ENCODE measurements at regions of chr4 and their contacts with region 1.

Region 1: DNA sequence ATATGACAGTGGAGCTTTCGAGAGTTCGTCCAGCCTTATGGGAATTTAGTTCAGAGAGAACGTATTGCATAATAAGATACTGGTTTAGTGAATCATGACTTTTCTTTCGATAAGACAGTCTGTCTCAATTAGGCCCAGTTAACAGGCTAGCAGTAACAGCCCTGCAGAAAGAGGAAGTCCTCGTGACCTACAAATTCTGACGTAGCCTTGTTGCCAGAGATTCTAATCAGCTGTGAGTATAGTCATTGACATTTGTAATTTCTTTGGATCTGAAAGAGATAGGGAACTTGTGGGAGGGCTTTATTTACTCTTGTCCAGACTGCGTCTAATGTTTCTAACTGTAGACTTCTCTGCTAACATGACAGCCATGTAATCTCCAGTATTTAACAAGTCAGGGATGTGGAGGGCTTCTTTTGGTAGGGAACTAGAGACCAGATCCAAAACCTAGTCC is 15.8 kb downstream of the ART3 start:
- DNase-seq: no peak

Region 2: DNA sequence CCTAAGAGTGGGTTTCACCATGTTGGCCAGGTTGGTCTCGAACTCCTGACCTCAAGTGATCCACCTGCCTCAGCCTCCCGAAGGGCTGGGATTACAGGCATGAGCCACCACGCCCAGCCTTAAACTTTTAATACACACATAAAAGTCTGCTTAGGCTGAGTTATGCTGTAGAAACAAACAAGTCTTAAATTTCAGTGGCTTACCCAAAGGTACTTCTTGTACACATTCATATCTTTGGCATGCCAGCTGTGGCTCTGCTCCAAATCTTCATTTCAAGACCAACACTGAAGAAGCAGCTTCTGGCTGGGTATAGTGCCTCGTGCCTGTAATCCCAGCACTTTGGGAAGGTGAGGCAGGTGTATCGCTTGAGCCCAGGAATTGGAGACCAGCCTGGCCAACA is 268.3 kb before region 1 on chr4:
- CTCF ChIA-PET with region 1: no interaction called
- POLR2A ChIA-PET with region 1: no interaction called
- DNase-seq: no peak

Region 3: GRCh38 chr4:76120199-76120598 is 29.9 kb after region 1 on chr4:
- CTCF ChIA-PET with region 1: no interaction called
- POLR2A ChIA-PET with region 1: no interaction called
- DNase-seq: no peak

Region 4: GRCh38 chr4:76148142-76148865 is 58.0 kb after region 1 on chr4 and contains the start of gene NUP54:
- CTCF ChIA-PET with region 1: interaction called, 10 read pairs
- POLR2A ChIA-PET with region 1: interaction called, 5 read pairs
- DNase-seq: peak; percentile 89

Measured in HEK293T (cell line).